Endothelial cell of umbilical vein (primary cell): ENCODE measurements at regions of chr4 and their contacts with region 1.

Region 1: DNA sequence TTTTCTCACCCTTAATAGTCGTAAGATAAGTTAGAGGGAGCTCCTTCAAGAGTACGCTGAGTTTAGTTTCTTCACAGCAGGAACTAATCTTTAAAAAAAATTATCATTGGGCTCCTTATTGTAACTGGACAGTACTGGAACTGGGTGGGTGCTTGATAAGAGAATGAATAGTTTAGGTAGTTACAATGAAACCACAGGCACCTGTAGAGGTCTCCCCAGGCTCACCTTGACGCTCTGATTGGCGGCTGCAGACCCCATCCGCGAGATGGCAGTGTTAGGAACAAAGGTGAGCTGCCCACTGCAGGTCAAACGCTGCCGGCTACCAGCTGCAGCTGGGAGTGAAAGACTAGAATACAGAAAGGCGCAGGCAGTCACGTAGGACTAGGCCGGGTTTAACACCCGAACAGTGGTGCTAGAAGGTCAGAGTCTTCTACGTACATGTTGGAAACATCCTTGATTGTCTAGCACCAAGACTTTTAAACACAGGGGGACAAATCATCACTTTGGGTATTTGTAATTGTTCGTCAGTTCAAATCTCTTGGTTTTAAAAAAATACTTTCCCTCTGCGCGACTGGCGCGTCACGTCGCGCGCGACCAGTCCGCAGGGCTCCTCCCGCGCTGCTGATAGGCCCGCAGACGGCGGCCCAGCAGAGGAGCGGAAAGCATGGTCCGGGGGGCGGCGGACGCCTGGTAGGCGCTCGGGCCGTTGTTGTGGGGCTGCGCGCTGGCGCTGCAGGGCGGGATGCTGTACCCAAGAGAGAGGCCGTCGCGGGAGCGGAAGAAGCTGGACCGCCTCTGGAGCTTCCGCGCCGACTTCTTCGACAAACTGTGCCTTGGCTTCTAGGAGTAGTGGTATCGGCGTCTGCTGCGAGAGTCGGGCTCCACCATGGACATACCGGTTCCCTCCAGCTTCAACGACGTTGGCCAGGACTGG is 45.6 kb downstream of the SMARCA5 start:
- DNase-seq: peak; percentile 85
- H3K4me3 ChIP-seq: peak overlapping the region; percentile 39 to 70 (median 43)
- H3K27ac ChIP-seq: peak overlapping the region; percentile 25
- H3K4me1 ChIP-seq: peaks cover 4% of the 10 kb centered on the region
- H3K27me3 ChIP-seq: no peaks in the 10 kb centered on the region
- CTCF ChIP-seq: peak; percentile 47 to 69
- POLR2A ChIP-seq: peak; percentile 42

Region 2: DNA sequence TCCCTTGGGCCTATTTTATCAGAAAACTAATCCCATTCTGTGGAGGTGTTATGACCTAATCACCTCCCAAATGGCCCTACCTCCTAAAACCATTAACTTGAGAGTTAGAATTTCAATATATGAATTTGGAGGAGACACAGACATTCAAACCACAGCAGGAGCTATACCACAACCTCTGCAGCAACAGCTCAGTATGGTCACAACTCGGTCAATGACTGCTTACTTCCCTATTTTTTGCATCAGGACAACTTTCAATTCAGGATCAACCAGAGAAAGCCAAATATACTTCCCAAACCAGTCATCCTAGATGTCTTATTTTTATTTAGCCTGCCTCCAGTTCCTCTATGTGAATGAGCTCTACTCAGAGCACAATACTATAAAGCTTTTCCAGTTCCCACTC is 56.9 kb before region 1 on chr4:
- CTCF ChIA-PET with region 1: no interaction called
- POLR2A ChIA-PET with region 1: no interaction called
- dilution Hi-C with region 1: no loop called
- intact Hi-C with region 1: no loop called
- DNase-seq: no peak
- H3K4me3 ChIP-seq: no peak overlapping the region
- H3K27ac ChIP-seq: no peak overlapping the region
- H3K4me1 ChIP-seq: no peaks in the 10 kb centered on the region
- H3K27me3 ChIP-seq: peaks cover 0 to 3% of the 10 kb centered on the region in 2 experiments
- CTCF ChIP-seq: no peak
- POLR2A ChIP-seq: no peak

Region 3: GRCh38 chr4:143586080-143586479 is 27.0 kb after region 1 on chr4:
- CTCF ChIA-PET with region 1: interaction called, 11 read pairs
- POLR2A ChIA-PET with region 1: no interaction called
- dilution Hi-C with region 1: no loop called
- intact Hi-C with region 1: no loop called
- DNase-seq: peak; percentile 86
- H3K4me3 ChIP-seq: no peak overlapping the region
- H3K27ac ChIP-seq: peak overlapping the region; percentile 97
- H3K4me1 ChIP-seq: peaks cover 18% of the 10 kb centered on the region
- H3K27me3 ChIP-seq: no peaks in the 10 kb centered on the region
- CTCF ChIP-seq: no peak
- POLR2A ChIP-seq: no peak

Region 4: GRCh38 chr4:143667461-143667860 is 108.4 kb after region 1 on chr4:
- CTCF ChIA-PET with region 1: no interaction called
- POLR2A ChIA-PET with region 1: no interaction called
- dilution Hi-C with region 1: no loop called
- intact Hi-C with region 1: no loop called
- DNase-seq: peak; percentile 96
- H3K4me3 ChIP-seq: no peak overlapping the region
- H3K27ac ChIP-seq: peak overlapping the region; percentile 46
- H3K4me1 ChIP-seq: peaks cover 10% of the 10 kb centered on the region
- H3K27me3 ChIP-seq: peaks cover 0 to 2% of the 10 kb centered on the region in 2 experiments
- CTCF ChIP-seq: no peak
- POLR2A ChIP-seq: no peak

Region 5: DNA sequence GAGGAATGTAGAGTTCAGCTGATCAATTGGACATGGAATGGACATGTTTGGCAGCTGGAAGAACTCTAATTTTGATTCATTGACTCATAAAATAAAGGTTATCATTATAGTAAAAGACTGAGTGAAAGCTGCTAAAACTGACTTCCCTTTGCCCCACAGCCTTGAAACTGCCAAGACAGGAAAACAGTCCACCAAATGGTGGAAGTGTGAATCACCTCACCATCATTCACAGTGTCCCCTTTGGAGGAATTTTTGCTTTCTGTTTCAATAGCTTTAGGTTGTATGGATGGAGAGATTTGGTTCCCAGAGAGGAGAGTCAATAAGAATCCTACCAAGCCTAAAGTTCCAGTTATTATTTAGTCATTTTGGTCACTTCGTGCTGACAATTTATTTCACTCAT is 162.2 kb after region 1 on chr4:
- CTCF ChIA-PET with region 1: interaction called, 4 read pairs
- POLR2A ChIA-PET with region 1: no interaction called
- dilution Hi-C with region 1: no loop called
- intact Hi-C with region 1: loop called (anchors 5 kb)
- DNase-seq: peak; percentile 72
- H3K4me3 ChIP-seq: no peak overlapping the region
- H3K27ac ChIP-seq: no peak overlapping the region
- H3K4me1 ChIP-seq: peaks cover 11% of the 10 kb centered on the region
- H3K27me3 ChIP-seq: no peaks in the 10 kb centered on the region
- CTCF ChIP-seq: no peak
- POLR2A ChIP-seq: no peak

Region 6: GRCh38 chr4:143986180-143986579 is 427.1 kb after region 1 on chr4:
- CTCF ChIA-PET with region 1: interaction called, 30 read pairs
- POLR2A ChIA-PET with region 1: no interaction called
- dilution Hi-C with region 1: no loop called
- intact Hi-C with region 1: no loop called
- DNase-seq: no peak
- H3K4me3 ChIP-seq: no peak overlapping the region
- H3K27ac ChIP-seq: no peak overlapping the region
- H3K4me1 ChIP-seq: no peaks in the 10 kb centered on the region
- H3K27me3 ChIP-seq: no peaks in the 10 kb centered on the region
- CTCF ChIP-seq: no peak
- POLR2A ChIP-seq: no peak

Region 7: DNA sequence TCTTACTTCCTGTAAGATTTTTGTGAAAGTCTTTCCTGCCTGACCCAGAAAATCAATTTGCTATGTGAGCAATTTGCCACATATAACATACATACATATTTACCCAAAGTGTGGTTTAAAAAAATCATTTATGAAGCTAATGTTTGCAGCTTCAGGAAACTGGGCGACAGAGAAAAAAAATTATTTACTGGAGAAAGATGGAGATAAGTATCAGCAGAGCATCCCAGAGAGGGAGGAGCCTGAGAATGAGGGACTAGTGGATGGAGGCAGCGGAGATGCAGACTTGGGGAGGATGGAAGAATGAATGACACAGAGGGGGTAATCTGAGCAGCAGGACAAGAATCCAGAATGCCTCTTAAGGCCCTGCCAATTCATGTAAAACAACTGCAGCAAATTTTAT is 582.4 kb after region 1 on chr4:
- CTCF ChIA-PET with region 1: no interaction called
- POLR2A ChIA-PET with region 1: no interaction called
- dilution Hi-C with region 1: no loop called
- intact Hi-C with region 1: loop called (anchors 1 kb)
- DNase-seq: no peak
- H3K4me3 ChIP-seq: no peak overlapping the region
- H3K27ac ChIP-seq: no peak overlapping the region
- H3K4me1 ChIP-seq: no peaks in the 10 kb centered on the region
- H3K27me3 ChIP-seq: no peaks in the 10 kb centered on the region
- CTCF ChIP-seq: no peak
- POLR2A ChIP-seq: no peak

Region 8: DNA sequence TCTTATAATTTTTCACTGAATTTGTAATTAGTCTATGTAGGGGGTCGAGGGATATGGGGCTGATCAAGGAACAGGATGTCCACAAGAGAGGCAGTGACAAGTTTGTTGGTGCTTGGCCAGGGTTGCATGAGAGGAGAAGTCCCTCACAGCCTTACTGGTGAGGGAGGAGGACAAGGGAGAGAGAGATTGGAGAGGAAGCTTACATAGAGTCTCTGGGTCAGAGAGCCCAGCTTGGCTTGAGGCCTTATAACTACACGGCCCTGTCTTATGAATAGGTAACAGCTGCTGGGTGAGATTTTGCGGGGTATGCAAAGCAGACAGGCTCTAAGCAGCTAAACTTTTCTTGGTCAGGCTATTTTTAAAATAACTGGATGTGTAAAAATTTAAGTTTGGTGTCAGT is 1659.2 kb after region 1 on chr4:
- CTCF ChIA-PET with region 1: no interaction called
- POLR2A ChIA-PET with region 1: no interaction called
- dilution Hi-C with region 1: no loop called
- intact Hi-C with region 1: no loop called
- DNase-seq: no peak
- H3K4me3 ChIP-seq: no peak overlapping the region
- H3K27ac ChIP-seq: no peak overlapping the region
- H3K4me1 ChIP-seq: peaks cover 4% of the 10 kb centered on the region
- H3K27me3 ChIP-seq: no peaks in the 10 kb centered on the region
- CTCF ChIP-seq: no peak
- POLR2A ChIP-seq: no peak